HEK293 (cell line): ENCODE measurements at regions of chr11 and their contacts with region 1.

Region 1: DNA sequence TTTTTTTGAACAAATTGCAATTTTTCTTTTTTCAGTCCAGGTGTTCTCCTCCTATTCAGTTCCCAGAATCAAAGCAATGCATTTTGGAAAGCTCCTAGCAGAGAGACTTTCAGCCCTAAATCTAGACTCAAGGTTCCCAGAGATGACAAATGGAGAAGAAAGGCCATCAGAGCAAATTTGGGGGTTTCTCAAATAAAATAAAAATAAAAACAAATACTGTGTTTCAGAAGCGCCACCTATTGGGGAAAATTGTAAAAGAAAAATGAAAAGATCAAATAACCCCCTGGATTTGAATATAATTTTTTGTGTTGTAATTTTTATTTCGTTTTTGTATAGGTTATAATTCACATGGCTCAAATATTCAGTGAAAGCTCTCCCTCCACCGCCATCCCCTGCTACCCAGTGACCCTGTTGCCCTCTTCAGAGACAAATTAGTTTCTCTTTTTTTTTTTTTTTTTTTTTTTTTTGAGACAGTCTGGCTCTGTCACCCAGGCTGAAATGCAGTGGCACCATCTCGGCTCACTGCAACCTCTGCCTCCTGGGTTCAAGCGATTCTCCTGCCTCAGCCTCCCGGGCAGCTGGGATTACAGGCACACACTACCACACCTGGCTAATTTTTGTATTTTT is 6.2 kb upstream of the UBE4A start:
- H3K4me3 ChIP-seq: no peak overlapping the region
- H3K27ac ChIP-seq: no peak overlapping the region
- H3K4me1 ChIP-seq: no peaks in the 10 kb centered on the region
- CTCF ChIP-seq: no peak

Region 2: GRCh38 chr11:118364956-118365615 is 11.9 kb after region 1 on chr11:
- CTCF ChIA-PET with region 1: interaction called, 11 read pairs
- POLR2A ChIA-PET with region 1: interaction called, 3 read pairs
- H3K4me3 ChIP-seq: no peak overlapping the region
- H3K27ac ChIP-seq: no peak overlapping the region
- H3K4me1 ChIP-seq: 0 out of 2 replicates have a peak, but pooled peaks cover 2% of the 10 kb centered on the region
- CTCF ChIP-seq: no peak